ENCODE measurements at regions of chr2 and their contacts with region 1.

Region 1: DNA sequence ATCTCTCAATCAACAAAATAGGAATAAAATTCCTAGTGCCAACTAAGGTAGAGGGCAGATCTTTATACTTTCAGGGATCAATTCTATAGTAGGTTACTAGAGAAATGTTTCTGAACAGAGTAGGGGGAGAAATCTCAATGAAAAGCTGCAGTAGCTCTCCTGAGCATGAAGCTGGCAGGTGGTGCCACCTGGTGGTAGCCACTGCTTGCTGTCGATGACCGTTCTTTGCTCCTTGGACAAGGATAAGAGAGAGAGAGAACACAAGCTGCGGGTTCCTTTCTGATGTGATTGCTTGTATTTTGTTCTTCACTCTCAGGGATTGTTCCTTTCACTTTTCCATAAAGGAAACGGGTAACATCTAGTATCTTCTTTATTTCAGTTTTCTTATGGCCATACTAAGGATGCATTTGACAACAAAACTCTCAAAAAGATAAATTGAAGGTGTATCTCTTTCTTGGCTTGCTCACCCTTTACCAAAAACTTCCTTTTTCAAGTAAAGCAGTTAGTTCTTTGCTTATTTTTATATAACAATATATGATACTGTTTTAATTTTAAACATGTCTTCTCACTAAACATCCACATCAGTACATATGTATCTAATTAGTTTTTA is 18.6 kb upstream of the MRPL19 start:
- DNase-seq: peak; percentile 75
- ATAC-seq: peak; percentile 96
- H3K4me3 ChIP-seq: no peak overlapping the region
- H3K27ac ChIP-seq: no peak overlapping the region
- H3K4me1 ChIP-seq: no peaks in the 10 kb centered on the region
- H3K27me3 ChIP-seq: peaks cover 0 to 26% of the 10 kb centered on the region in 2 experiments; a peak in 2 of 5 replicates
- CTCF ChIP-seq: peak; percentile 96
- EP300 ChIP-seq: no peak
- POLR2A ChIP-seq: no peak
- RAD21 ChIP-seq: peak; percentile 91

Region 2: GRCh38 chr2:75608684-75609333 is 19.2 kb before region 1 on chr2:
- CTCF ChIA-PET with region 1: no interaction called
- POLR2A ChIA-PET with region 1: interaction called, 3 read pairs
- in situ Hi-C with region 1: no loop called
- intact Hi-C with region 1: loop called (anchors 1 kb)
- DNase-seq: peak; percentile 79
- ATAC-seq: peak; percentile 95
- H3K4me3 ChIP-seq: peak overlapping the region; percentile 28 to 65 (median 28); a peak in 5 of 6 replicates
- H3K27ac ChIP-seq: peak overlapping the region; percentile 8
- H3K4me1 ChIP-seq: peaks cover 66% of the 10 kb centered on the region
- H3K27me3 ChIP-seq: no peaks in the 10 kb centered on the region; a peak in 1 of 5 replicates
- CTCF ChIP-seq: peak; percentile 99
- EP300 ChIP-seq: peak in 1 of 2 experiments; percentile 33; a peak in 1 of 4 replicates
- POLR2A ChIP-seq: no peak
- RAD21 ChIP-seq: peak; percentile 99

Region 3: GRCh38 chr2:75640621-75641121 is 12.7 kb after region 1 on chr2:
- CTCF ChIA-PET with region 1: no interaction called
- POLR2A ChIA-PET with region 1: no interaction called
- in situ Hi-C with region 1: no loop called
- intact Hi-C with region 1: no loop called
- DNase-seq: peak; percentile 56
- ATAC-seq: peak; percentile 97
- H3K4me3 ChIP-seq: no peak overlapping the region
- H3K27ac ChIP-seq: no peak overlapping the region
- H3K4me1 ChIP-seq: peaks cover 17% of the 10 kb centered on the region
- H3K27me3 ChIP-seq: no peaks in the 10 kb centered on the region; a peak in 1 of 5 replicates
- CTCF ChIP-seq: peak; percentile 96
- EP300 ChIP-seq: no peak
- POLR2A ChIP-seq: no peak
- RAD21 ChIP-seq: peak; percentile 93

Region 4: GRCh38 chr2:75654012-75654411 is 26.0 kb after region 1 on chr2:
- CTCF ChIA-PET with region 1: no interaction called
- POLR2A ChIA-PET with region 1: no interaction called
- in situ Hi-C with region 1: no loop called
- intact Hi-C with region 1: no loop called
- DNase-seq: no peak
- ATAC-seq: no peak
- H3K4me3 ChIP-seq: no peak overlapping the region
- H3K27ac ChIP-seq: no peak overlapping the region
- H3K4me1 ChIP-seq: peaks cover 6% of the 10 kb centered on the region
- H3K27me3 ChIP-seq: no peaks in the 10 kb centered on the region
- CTCF ChIP-seq: 0 out of 2 replicates have a peak, but pooled peaks have one; percentile 9
- EP300 ChIP-seq: no peak
- POLR2A ChIP-seq: no peak
- RAD21 ChIP-seq: no peak